ENCODE measurements at regions of chrX and their contacts with region 1.

Region 1: GRCh38 chrX:7925867-7926472 is 1.2 kb downstream of the PNPLA4 start:
- DNase-seq: peak; percentile 64
- H3K4me3 Mint-ChIP-seq: peak overlapping the region; percentile 73
- H3K27ac Mint-ChIP-seq: no peak overlapping the region
- H3K4me1 Mint-ChIP-seq: no peaks in the 10 kb centered on the region
- H3K27me3 Mint-ChIP-seq: no peaks in the 10 kb centered on the region
- CTCF ChIP-seq: peak; percentile 55

Region 2: GRCh38 chrX:6021316-6022091 is 1904.5 kb before region 1 on chrX:
- CTCF ChIA-PET with region 1: no interaction called
- intact Hi-C with region 1: loop called (anchors 10 kb)
- DNase-seq: peak; percentile 21
- H3K4me3 Mint-ChIP-seq: no peak overlapping the region
- H3K27ac Mint-ChIP-seq: no peak overlapping the region
- H3K4me1 Mint-ChIP-seq: no peaks in the 10 kb centered on the region
- H3K27me3 Mint-ChIP-seq: no peaks in the 10 kb centered on the region
- CTCF ChIP-seq: no peak

Region 3: GRCh38 chrX:7996414-7996813 is 70.4 kb after region 1 on chrX:
- CTCF ChIA-PET with region 1: no interaction called
- intact Hi-C with region 1: no loop called
- DNase-seq: peak; percentile 10
- H3K4me3 Mint-ChIP-seq: no peak overlapping the region
- H3K27ac Mint-ChIP-seq: no peak overlapping the region
- H3K4me1 Mint-ChIP-seq: no peaks in the 10 kb centered on the region
- H3K27me3 Mint-ChIP-seq: no peaks in the 10 kb centered on the region
- CTCF ChIP-seq: no peak

Measured in Calu3 (cell line).